ENCODE measurements at regions of chr11 and their contacts with region 1.

Region 1: GRCh38 chr11:121194731-121195596 is 93.9 kb downstream of the TECTA start:
- DNase-seq: peak; percentile 70
- H3K4me3 Mint-ChIP-seq: no peak overlapping the region
- H3K27ac Mint-ChIP-seq: no peak overlapping the region
- H3K4me1 Mint-ChIP-seq: no peaks in the 10 kb centered on the region
- H3K27me3 Mint-ChIP-seq: peaks cover 81% of the 10 kb centered on the region
- CTCF ChIP-seq: peak; percentile 87

Region 2: GRCh38 chr11:120235024-120235861 is 959.7 kb before region 1 on chr11:
- CTCF ChIA-PET with region 1: no interaction called
- POLR2A ChIA-PET with region 1: no interaction called
- intact Hi-C with region 1: loop called (anchors 5 kb)
- DNase-seq: peak; percentile 75
- H3K4me3 Mint-ChIP-seq: no peak overlapping the region
- H3K27ac Mint-ChIP-seq: no peak overlapping the region
- H3K4me1 Mint-ChIP-seq: no peaks in the 10 kb centered on the region
- H3K27me3 Mint-ChIP-seq: peaks cover 28% of the 10 kb centered on the region
- CTCF ChIP-seq: peak; percentile 89

Region 3: DNA sequence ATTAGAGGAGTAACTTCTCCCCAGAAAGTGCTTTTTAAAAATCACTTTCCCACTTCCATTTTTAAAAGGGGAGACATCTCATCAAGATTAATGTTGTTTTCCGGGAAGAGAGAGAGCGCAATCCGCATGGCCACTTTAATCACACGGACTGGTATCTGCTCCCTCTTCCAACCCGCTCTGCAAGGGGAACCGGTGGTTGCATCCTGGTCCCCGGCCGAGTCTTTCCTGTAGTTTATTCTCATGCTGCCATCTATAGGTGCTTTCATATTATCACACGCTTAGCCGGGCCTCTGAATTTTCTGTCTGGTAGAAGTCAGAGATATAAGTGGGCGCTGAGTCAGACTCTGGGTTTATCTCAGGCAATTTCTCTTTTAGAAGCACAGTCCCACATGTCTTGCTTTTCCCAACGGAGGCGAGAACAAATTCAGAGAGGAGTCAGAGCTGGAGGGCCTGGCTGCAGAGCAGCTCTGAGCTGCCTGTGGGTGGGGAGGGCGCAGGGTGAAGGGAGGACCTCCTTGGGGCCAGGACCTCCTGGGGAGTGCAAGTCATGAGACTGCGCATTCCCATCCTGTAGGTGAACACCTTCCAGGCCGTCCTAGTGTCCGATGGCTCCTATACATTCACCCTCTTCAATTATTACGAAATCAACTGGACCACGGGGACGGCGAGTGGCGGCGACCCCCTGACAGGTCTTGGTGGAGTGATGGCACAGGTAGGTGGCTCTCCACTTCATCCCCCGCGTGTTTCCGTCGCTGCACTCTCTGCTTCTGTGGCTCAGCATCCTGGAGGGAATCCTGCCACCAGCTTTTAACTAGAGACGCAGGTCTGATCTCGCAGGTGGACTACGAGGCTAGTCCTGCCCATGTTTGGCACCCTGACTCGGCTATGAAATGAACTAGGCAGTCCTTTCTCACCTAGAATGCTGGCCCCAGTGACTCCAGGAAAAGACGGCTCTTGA is 82.2 kb before region 1 on chr11:
- CTCF ChIA-PET with region 1: interaction called, 3 read pairs
- POLR2A ChIA-PET with region 1: no interaction called
- intact Hi-C with region 1: loop called (anchors 1 kb)
- DNase-seq: peak; percentile 59
- H3K4me3 Mint-ChIP-seq: no peak overlapping the region
- H3K27ac Mint-ChIP-seq: no peak overlapping the region
- H3K4me1 Mint-ChIP-seq: no peaks in the 10 kb centered on the region
- H3K27me3 Mint-ChIP-seq: peaks cover 50% of the 10 kb centered on the region
- CTCF ChIP-seq: peak; percentile 48

Region 4: GRCh38 chr11:121141066-121141465 is 53.9 kb before region 1 on chr11:
- CTCF ChIA-PET with region 1: no interaction called
- POLR2A ChIA-PET with region 1: no interaction called
- intact Hi-C with region 1: no loop called
- DNase-seq: no peak
- H3K4me3 Mint-ChIP-seq: no peak overlapping the region
- H3K27ac Mint-ChIP-seq: no peak overlapping the region
- H3K4me1 Mint-ChIP-seq: no peaks in the 10 kb centered on the region
- H3K27me3 Mint-ChIP-seq: peaks cover 71% of the 10 kb centered on the region
- CTCF ChIP-seq: no peak

Region 5: DNA sequence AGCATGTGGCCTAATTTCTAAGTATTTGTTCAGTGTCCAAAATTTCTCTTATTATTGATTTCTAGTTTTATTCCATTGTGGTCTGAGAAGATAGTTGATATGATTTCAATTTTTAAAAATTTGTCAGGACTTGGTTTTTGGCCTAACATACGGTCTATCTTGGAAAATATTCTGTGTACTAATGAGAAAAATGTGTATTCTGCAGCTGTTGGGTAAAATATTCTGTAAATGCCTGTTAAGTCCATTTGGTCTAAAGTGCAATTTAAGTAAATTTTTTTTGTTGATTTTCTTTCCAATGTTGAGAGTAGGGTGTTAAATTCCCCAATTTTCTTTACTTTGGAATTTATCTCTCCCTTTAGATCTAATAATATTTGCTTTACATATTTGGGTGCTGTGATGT is 15.7 kb before region 1 on chr11:
- CTCF ChIA-PET with region 1: interaction called, 20 read pairs
- POLR2A ChIA-PET with region 1: no interaction called
- intact Hi-C with region 1: no loop called
- DNase-seq: no peak
- H3K4me3 Mint-ChIP-seq: no peak overlapping the region
- H3K27ac Mint-ChIP-seq: no peak overlapping the region
- H3K4me1 Mint-ChIP-seq: no peaks in the 10 kb centered on the region
- H3K27me3 Mint-ChIP-seq: peaks cover 5% of the 10 kb centered on the region
- CTCF ChIP-seq: no peak

Region 6: DNA sequence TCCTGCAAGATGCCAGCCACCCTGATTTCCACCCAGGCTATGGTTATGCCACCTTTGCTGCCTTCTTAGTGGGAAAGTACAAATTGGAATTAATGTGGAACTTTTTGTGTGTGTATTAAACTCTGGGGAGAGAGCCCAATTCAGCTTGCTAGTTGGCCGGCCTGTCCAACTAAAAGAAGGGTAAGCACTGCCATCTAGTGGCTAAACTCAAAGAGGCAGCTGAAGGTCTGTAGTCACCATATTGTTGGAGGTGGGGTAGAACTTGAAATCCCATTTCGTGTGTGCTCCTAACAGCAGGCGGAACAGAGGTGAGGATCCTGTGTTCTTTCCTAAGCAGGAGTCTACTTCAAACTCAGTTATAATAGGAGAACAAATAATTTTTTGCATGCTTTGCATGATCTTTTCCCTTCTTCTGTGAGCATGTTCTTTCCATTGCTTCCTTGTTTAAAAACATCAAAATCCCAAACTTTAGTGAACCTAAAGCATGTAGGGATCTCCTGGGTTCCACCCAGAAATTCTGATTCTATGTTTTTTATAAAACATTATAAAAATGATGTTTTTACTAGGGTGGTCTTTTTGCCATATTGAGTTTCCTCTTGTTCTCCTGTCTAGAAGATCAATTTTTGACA is 396.6 kb after region 1 on chr11:
- CTCF ChIA-PET with region 1: interaction called, 3 read pairs
- POLR2A ChIA-PET with region 1: no interaction called
- intact Hi-C with region 1: loop called (anchors 2 kb)
- DNase-seq: peak; percentile 80
- H3K4me3 Mint-ChIP-seq: no peak overlapping the region
- H3K27ac Mint-ChIP-seq: no peak overlapping the region
- H3K4me1 Mint-ChIP-seq: peaks cover 24% of the 10 kb centered on the region
- H3K27me3 Mint-ChIP-seq: no peaks in the 10 kb centered on the region
- CTCF ChIP-seq: peak; percentile 86